Adrenal gland (tissue), 19 donors: ENCODE measurements at regions of chr11 and their contacts with region 1.

Region 1: GRCh38 chr11:94897330-94897768 is 76.0 kb downstream of the CWC15 start:
- DNase-seq: peak; percentile 44 to 86 (median 65)
- H3K4me3 ChIP-seq: no peak overlapping the region
- H3K27ac ChIP-seq: no peak overlapping the region
- H3K4me1 ChIP-seq: peaks cover 0 to 5% of the 10 kb centered on the region in 2 donors
- H3K27me3 ChIP-seq: no peaks in the 10 kb centered on the region
- CTCF ChIP-seq: peak; percentile 68 to 84 (median 77)
- POLR2A ChIP-seq: no peak

Region 2: GRCh38 chr11:94519478-94520084 is 377.8 kb before region 1 on chr11:
- intact Hi-C with region 1: loop called in 1 of 2 experiments (anchors 10 kb)
- DNase-seq: peak in 1 of 7 donors; percentile 30
- H3K4me3 ChIP-seq: no peak overlapping the region
- H3K27ac ChIP-seq: no peak overlapping the region
- H3K4me1 ChIP-seq: peaks cover 0 to 4% of the 10 kb centered on the region in 2 donors
- H3K27me3 ChIP-seq: no peaks in the 10 kb centered on the region
- CTCF ChIP-seq: peak; percentile 45 to 77 (median 56)
- POLR2A ChIP-seq: no peak

Region 3: DNA sequence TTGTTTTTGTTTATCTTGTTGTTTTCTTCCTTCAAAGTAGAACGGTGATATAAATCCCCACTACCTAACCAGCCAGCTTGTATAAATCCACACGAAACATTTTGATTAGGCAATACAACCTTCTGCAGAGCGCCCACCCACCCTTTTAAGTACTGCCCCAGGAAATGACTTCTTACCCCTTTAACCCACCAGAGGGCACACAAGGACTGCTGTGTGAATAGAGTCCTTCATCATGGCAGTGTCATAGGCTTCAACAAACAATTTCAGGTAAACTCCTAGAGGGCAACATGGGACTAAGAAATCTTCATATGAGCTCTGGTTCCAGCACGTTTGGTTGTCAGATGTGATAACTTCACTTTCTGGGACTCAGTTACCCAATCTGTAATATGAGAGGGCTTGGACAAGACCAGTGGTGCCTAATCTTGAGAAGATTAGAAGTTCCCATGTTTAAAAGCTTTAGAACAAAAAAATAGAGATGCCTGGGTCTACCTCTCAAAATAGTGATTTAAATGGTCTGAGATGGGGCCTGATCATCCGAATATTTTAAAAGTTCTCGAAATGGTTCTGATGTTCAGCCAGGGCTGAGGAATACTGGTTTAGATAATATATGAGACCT is 274.1 kb before region 1 on chr11:
- intact Hi-C with region 1: loop called in 1 of 2 experiments (anchors 5 kb)
- DNase-seq: peak; percentile 30 to 78 (median 46)
- H3K4me3 ChIP-seq: no peak overlapping the region
- H3K27ac ChIP-seq: no peak overlapping the region
- H3K4me1 ChIP-seq: no peaks in the 10 kb centered on the region
- H3K27me3 ChIP-seq: no peaks in the 10 kb centered on the region
- CTCF ChIP-seq: peak; percentile 50 to 93 (median 72)
- POLR2A ChIP-seq: no peak

Region 4: DNA sequence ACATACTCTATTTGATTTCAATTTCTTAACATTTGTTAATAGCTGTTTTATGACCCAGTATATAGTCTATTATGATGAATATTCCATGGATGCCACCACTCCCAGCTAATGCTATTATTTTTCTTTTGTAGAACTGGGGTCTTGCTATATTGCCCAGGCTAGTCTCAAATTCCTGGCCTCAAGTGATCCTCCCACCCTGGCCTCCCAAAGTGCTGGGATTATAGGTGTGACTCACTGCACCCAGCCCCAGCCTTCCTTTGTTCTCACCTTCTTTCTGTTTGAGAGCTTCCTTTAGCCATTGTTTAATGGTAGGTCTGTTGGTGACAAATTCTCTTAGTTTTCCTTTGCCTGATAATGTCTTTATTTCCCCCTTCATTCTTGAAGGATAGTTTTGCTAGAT is 182.1 kb before region 1 on chr11:
- intact Hi-C with region 1: no loop called
- DNase-seq: no peak
- H3K4me3 ChIP-seq: no peak overlapping the region
- H3K27ac ChIP-seq: no peak overlapping the region
- H3K4me1 ChIP-seq: no peaks in the 10 kb centered on the region
- H3K27me3 ChIP-seq: no peaks in the 10 kb centered on the region
- CTCF ChIP-seq: no peak
- POLR2A ChIP-seq: no peak

Region 5: GRCh38 chr11:94786264-94787126 is 110.9 kb before region 1 on chr11:
- intact Hi-C with region 1: loop called in 1 of 2 experiments (anchors 5 kb)
- DNase-seq: no peak
- H3K4me3 ChIP-seq: no peak overlapping the region
- H3K27ac ChIP-seq: no peak overlapping the region
- H3K4me1 ChIP-seq: peaks cover 0 to 45% of the 10 kb centered on the region in 2 donors
- H3K27me3 ChIP-seq: no peaks in the 10 kb centered on the region
- CTCF ChIP-seq: peak; percentile 54 to 74 (median 66)
- POLR2A ChIP-seq: no peak